ENCODE measurements at regions of chr5 and their contacts with region 1.

Region 1: GRCh38 chr5:96807075-96807654 is 580 bp downstream of the ERAP1 start:
- DNase-seq: no peak
- H3K4me3 ChIP-seq: peak overlapping the region; percentile 79
- H3K27ac ChIP-seq: peak overlapping the region; percentile 95
- H3K27me3 ChIP-seq: no peaks in the 10 kb centered on the region
- CTCF ChIP-seq: no peak

Region 2: GRCh38 chr5:96601811-96602244 is 205.3 kb before region 1 on chr5:
- CTCF ChIA-PET with region 1: interaction called, 3 read pairs
- POLR2A ChIA-PET with region 1: interaction called, 11 read pairs
- DNase-seq: peak; percentile 44
- H3K4me3 ChIP-seq: no peak overlapping the region
- H3K27ac ChIP-seq: no peak overlapping the region
- H3K27me3 ChIP-seq: no peaks in the 10 kb centered on the region
- CTCF ChIP-seq: peak; percentile 85

Region 3: GRCh38 chr5:96790961-96791504 is 16.1 kb before region 1 on chr5:
- CTCF ChIA-PET with region 1: no interaction called
- POLR2A ChIA-PET with region 1: interaction called, 11 read pairs
- DNase-seq: no peak
- H3K4me3 ChIP-seq: no peak overlapping the region
- H3K27ac ChIP-seq: no peak overlapping the region
- H3K27me3 ChIP-seq: no peaks in the 10 kb centered on the region
- CTCF ChIP-seq: no peak

Region 4: GRCh38 chr5:96829297-96829696 is 22.1 kb after region 1 on chr5:
- CTCF ChIA-PET with region 1: interaction called, 3 read pairs
- POLR2A ChIA-PET with region 1: interaction called, 10 read pairs
- DNase-seq: no peak
- H3K4me3 ChIP-seq: no peak overlapping the region
- H3K27ac ChIP-seq: no peak overlapping the region
- H3K27me3 ChIP-seq: no peaks in the 10 kb centered on the region
- CTCF ChIP-seq: no peak

Region 5: DNA sequence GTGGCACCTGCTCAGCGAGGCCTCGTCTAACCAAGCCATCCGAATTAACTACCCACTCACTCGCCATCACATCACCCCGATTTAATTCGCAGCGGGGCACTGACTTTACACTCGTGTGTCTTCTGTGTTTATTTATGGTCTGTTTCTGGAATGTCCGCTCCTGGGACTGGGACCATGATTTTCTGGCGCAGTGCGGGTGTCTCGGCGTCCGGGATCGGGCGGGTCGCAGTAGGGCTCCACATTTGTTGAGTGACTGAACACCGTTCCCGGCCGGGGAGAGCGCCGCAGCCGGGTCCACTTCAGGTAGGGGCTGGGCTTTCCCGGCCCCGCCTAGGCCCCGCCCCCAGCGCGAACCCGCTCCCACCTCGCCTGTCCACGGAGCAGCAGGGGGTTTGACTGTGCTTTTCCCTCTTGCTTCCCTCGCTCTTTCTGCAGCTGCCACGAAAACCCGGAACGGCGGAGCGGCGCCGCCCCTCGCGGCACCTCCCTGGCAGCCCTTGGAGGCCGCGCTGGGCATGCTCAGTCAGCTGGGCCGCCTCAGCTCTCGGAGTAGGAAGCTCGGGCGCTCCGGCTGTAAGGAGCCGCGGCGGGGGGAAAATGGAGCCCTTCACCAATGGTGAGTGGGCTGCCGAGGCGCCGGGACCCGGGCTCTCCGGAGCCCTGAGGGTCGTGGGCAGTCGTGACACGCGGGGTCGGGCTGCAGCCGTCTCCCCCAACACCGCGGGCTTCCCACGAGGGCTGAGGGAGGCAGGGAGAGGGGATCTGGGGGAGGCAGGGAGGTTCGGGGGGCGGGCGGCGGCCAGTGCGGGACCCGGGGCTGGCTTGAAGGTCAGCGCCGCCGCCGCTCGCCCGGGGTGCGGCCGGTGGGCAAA is 128.6 kb after region 1 on chr5 and contains the start of gene LNPEP:
- CTCF ChIA-PET with region 1: no interaction called
- POLR2A ChIA-PET with region 1: interaction called, 11 read pairs
- DNase-seq: peak; percentile 94
- H3K4me3 ChIP-seq: peak within 1 kb of the TSS; percentile 88
- H3K27ac ChIP-seq: peak within 1 kb of the TSS; percentile 97
- H3K27me3 ChIP-seq: no peaks in the 10 kb centered on the region
- CTCF ChIP-seq: no peak
- polyA plus RNA-seq, gene LNPEP: 9.7 and 13.4 TPM in 2 replicates

Measured in AG04450 (cell line).